ENCODE measurements at regions of chr10 and their contacts with region 1.

Region 1: DNA sequence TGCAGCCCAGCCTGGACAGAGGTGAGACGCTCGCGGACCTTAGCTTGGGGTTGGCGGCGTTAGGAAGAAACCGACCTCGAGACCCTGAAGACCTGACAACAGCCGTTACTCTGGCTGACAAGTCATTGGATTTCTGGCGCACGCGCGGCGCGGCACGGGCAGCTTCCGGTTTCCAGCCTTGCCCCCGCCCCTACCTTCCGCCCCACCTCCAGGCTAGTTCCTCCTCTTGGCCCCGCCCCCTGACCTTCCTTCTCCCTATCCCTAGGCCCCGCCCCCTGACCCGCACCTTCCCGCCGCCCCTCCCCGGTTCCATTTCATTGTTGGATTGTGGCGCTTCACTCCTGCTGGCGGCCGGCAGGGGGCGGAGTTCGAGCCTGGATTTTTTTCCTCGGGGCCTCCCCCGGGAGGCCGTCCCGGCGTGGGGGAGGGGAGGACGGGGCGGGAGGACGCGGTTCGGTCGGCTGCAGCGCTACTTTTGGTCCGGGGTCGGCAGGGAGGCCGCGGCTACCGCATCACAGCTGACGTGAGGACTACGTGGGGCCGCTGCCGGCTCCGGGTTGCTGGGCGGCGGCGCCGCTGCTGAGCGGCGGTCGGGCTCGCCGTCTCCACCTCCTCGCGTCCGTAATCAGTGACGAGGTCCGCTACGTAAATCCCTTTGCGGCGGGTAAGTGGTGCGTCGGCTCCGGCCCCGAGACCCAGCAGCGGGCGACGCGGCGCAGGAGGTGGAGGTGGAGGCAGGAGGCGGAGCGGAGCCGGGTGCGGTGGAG is at the start of gene CREM:
- DNase-seq: peak; percentile 98
- H3K4me3 Mint-ChIP-seq: peak within 1 kb of the TSS; percentile 82
- H3K27ac Mint-ChIP-seq: peak within 1 kb of the TSS; percentile 97
- H3K4me1 Mint-ChIP-seq: peaks cover 6% of the 10 kb centered on the region
- H3K27me3 Mint-ChIP-seq: no peaks in the 10 kb centered on the region
- CTCF ChIP-seq: peak; percentile 86
- total RNA-seq, gene CREM: 30.2 and 31.3 TPM in 2 replicates

Region 2: DNA sequence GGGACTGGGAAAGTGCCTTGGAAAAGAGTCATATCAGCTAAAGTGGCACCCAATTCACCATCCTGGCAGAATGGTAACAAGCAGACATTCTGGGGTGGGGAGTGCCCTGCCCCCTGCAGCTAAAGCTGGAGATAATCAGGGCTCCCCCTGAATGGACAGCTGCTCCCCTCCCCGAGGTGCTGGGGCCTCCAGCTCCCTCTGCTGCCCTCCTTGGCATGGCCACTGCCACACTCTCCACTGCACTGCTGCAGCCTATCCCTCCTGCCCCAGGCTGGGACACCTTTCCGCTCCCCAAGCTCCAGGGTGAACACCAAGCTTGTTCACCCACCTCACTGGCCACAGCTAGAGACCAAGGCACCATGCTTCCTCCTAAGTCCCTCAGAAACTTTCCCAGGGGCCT is 301.8 kb before region 1 on chr10:
- CTCF ChIA-PET with region 1: no interaction called
- POLR2A ChIA-PET with region 1: no interaction called
- intact Hi-C with region 1: no loop called
- DNase-seq: peak; percentile 20
- H3K4me3 Mint-ChIP-seq: no peak overlapping the region
- H3K27ac Mint-ChIP-seq: no peak overlapping the region
- H3K4me1 Mint-ChIP-seq: peaks cover 13% of the 10 kb centered on the region
- H3K27me3 Mint-ChIP-seq: no peaks in the 10 kb centered on the region
- CTCF ChIP-seq: no peak

Region 3: DNA sequence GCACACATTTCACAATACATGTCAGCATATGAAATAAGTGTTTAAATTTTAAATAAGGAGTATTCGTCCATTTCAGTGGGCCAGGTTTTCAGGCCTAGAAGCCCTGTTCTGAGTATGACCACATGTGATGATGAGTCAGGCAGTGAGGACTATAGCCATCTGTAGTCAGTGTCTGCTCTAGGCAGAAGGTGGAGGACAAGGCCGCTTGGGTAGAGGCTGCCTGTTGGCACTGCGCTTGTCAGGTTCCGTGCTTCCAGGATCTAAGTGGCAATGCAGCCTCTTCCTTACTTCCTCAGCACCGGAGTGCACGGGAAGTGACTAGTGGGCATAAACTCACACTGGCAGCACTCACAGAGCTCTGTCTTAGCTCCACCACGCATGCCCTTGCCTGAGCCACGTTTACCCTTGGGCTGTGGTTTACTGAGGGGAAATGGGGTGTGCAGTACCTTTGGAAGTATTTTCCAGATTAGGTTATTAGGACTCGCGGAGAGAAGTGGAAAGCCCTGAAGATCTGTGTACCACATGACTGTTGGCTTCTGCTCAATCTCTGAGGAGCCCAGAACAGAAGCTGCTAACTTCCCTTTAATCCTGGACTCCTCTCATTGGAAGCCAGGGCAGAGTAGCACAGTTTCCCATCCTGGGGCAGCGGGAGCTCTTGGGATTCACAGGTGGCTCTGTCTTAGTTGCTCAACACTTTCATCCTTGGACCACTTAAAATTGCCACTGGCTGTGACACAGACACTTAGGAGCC is 390.9 kb after region 1 on chr10:
- CTCF ChIA-PET with region 1: no interaction called
- POLR2A ChIA-PET with region 1: no interaction called
- intact Hi-C with region 1: no loop called
- DNase-seq: no peak
- H3K4me3 Mint-ChIP-seq: no peak overlapping the region
- H3K27ac Mint-ChIP-seq: peak overlapping the region; percentile 10
- H3K4me1 Mint-ChIP-seq: no peaks in the 10 kb centered on the region
- H3K27me3 Mint-ChIP-seq: no peaks in the 10 kb centered on the region
- CTCF ChIP-seq: no peak

Region 4: GRCh38 chr10:35635576-35635975 is 508.9 kb after region 1 on chr10:
- CTCF ChIA-PET with region 1: no interaction called
- POLR2A ChIA-PET with region 1: no interaction called
- intact Hi-C with region 1: loop called (anchors 10 kb)
- DNase-seq: peak; percentile 79
- H3K4me3 Mint-ChIP-seq: no peak overlapping the region
- H3K27ac Mint-ChIP-seq: no peak overlapping the region
- H3K4me1 Mint-ChIP-seq: peaks cover 23% of the 10 kb centered on the region
- H3K27me3 Mint-ChIP-seq: no peaks in the 10 kb centered on the region
- CTCF ChIP-seq: peak; percentile 87